PC-3 (cell line): ENCODE measurements at regions of chr10 and their contacts with region 1.

Region 1: GRCh38 chr10:73899423-73899822 is 11.5 kb upstream of the PLAU start:
- DNase-seq: peak; percentile 100
- ATAC-seq: peak; percentile 93
- H3K4me3 ChIP-seq: peak overlapping the region; percentile 8; the same call in 1 of the 2 replicates
- H3K27ac ChIP-seq: peak overlapping the region; percentile 78
- H3K4me1 ChIP-seq: peaks cover 54% of the 10 kb centered on the region
- H3K27me3 ChIP-seq: no peaks in the 10 kb centered on the region
- CTCF ChIP-seq: no peak

Region 2: DNA sequence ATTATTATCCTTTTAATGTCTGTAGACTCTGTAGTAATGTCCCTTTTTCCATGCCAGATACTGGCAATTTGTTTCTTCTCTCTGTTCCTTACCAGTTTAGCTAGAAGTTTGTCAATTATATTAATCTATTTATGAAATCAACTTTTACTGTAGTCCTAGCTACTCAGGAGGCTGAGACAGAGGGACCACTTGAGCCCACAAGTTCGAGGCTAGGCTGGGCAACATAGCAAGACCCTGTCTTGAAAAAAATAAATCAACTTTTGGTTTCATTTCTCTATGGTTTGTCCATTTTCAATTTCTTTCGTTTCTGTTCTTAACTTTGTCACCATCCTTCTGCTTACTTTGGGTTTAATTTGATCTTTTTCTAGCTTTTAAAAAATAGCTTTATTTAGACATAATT is 902.3 kb before region 1 on chr10:
- CTCF ChIA-PET with region 1: no interaction called
- POLR2A ChIA-PET with region 1: no interaction called
- intact Hi-C with region 1: no loop called
- DNase-seq: no peak
- ATAC-seq: peak; percentile 10; the same call in 1 of the 2 replicates
- H3K4me3 ChIP-seq: no peak overlapping the region
- H3K27ac ChIP-seq: no peak overlapping the region
- H3K4me1 ChIP-seq: no peaks in the 10 kb centered on the region
- H3K27me3 ChIP-seq: no peaks in the 10 kb centered on the region
- CTCF ChIP-seq: no peak

Region 3: DNA sequence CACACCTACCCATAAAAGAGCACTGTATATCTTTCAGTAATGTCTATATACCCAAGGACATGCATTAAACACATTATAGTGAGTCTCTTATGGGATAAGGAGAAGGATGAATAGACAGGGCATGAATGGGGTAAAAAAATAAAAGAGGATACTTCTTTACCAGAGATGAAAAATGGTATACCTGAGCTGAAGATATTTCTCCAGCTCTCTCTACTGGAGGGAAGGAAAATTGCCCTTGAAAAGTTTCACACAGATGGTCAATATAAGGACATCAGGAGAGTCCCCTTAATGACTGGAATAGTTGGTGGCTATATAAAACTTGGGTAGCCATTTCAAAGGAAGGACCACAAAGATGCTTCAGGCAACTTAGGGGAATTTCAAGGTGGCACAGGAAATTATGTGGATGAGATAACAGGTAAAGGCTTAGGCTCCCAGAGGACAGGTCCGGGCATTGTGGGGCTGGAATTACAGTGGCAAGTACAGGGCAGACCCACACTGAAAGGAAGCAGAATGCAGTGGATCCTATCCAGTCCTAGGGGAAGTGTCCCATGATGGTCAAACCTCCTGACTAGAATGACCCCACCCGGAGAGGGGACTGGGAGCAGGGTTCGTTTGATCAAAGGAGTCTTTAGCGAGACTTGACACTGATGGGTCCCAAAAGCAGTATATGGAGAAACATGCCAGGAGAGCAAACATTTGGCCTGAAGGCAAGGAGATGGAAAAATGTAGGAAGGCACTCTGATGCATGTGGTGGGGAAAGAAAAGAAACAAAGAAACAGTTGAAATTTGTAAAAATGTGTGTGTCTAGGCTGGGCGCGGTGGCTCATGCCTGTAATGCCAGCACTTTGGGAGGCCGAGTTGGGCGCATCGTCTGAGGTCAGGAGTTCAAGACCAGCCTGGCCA is 47.1 kb after region 1 on chr10:
- CTCF ChIA-PET with region 1: interaction called, 34 read pairs
- POLR2A ChIA-PET with region 1: interaction called, 15 read pairs
- intact Hi-C with region 1: no loop called
- DNase-seq: peak; percentile 69
- ATAC-seq: peak; percentile 17
- H3K4me3 ChIP-seq: no peak overlapping the region
- H3K27ac ChIP-seq: no peak overlapping the region
- H3K4me1 ChIP-seq: peaks cover 8% of the 10 kb centered on the region
- H3K27me3 ChIP-seq: no peaks in the 10 kb centered on the region
- CTCF ChIP-seq: peak; percentile 83

Region 4: DNA sequence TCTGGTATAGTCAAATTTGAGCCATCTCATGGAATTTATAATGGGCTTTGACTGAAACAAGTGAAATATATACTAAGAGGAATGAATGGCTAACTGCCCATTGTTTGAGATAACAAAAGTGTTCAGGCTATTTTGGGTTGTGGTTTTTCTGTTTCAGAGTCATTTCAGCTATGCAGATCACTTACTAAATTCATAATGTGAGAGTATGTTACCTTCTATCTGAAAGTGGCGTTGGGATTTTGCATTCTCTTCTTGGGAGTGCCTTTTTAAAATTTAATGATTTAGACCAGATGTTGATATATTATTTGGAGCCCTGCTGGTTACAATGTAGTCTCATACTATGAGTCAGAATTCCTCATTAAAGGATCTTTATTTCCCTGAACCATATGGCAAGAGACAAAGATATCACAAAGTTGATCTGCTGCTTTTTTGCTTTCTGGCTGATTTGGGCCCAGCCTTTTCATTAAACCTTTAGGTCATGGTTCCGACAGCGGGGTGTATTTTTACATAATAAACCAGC is 108.8 kb after region 1 on chr10:
- CTCF ChIA-PET with region 1: no interaction called
- POLR2A ChIA-PET with region 1: no interaction called
- intact Hi-C with region 1: no loop called
- DNase-seq: peak; percentile 98
- ATAC-seq: peak; percentile 80
- H3K4me3 ChIP-seq: peak overlapping the region; percentile 1; the same call in 1 of the 2 replicates
- H3K27ac ChIP-seq: peak overlapping the region; percentile 54
- H3K4me1 ChIP-seq: peaks cover 68% of the 10 kb centered on the region
- H3K27me3 ChIP-seq: no peaks in the 10 kb centered on the region
- CTCF ChIP-seq: 0 out of 2 replicates have a peak, but pooled peaks have one; percentile 17

Region 5: GRCh38 chr10:74021248-74022055 is 122.0 kb after region 1 on chr10:
- CTCF ChIA-PET with region 1: interaction called, 13 read pairs
- POLR2A ChIA-PET with region 1: no interaction called
- intact Hi-C with region 1: no loop called
- DNase-seq: peak; percentile 89
- ATAC-seq: peak; percentile 53
- H3K4me3 ChIP-seq: no peak overlapping the region
- H3K27ac ChIP-seq: peak overlapping the region; percentile 14
- H3K4me1 ChIP-seq: peaks cover 37% of the 10 kb centered on the region
- H3K27me3 ChIP-seq: no peaks in the 10 kb centered on the region
- CTCF ChIP-seq: no peak

Region 6: GRCh38 chr10:74058658-74059057 is 159.2 kb after region 1 on chr10:
- CTCF ChIA-PET with region 1: interaction called, 11 read pairs
- POLR2A ChIA-PET with region 1: interaction called, 6 read pairs
- intact Hi-C with region 1: no loop called
- DNase-seq: peak; percentile 77
- ATAC-seq: no peak
- H3K4me3 ChIP-seq: no peak overlapping the region; the same call in 1 of the 2 replicates
- H3K27ac ChIP-seq: peak overlapping the region; percentile 71
- H3K4me1 ChIP-seq: peaks cover 55% of the 10 kb centered on the region
- H3K27me3 ChIP-seq: no peaks in the 10 kb centered on the region
- CTCF ChIP-seq: peak; percentile 75

Region 7: DNA sequence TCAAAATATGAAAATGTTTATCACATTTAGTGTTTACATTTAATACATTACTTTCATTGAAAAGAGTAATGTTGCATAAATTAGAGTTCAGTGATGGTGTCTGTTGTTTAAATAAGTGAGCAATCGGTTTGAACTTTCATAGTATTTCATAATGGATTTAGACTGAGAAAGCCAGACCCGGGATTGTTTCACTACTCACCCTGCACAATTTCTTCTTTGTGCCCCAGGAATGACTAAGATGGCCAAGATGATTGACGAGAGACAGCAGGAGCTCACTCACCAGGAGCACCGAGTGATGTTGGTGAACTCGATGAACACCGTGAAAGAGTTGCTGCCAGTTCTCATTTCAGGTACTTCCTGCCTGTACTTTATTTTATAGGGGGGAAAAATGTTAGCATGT is 173.1 kb after region 1 on chr10:
- CTCF ChIA-PET with region 1: no interaction called
- POLR2A ChIA-PET with region 1: no interaction called
- intact Hi-C with region 1: no loop called
- DNase-seq: peak; percentile 80
- ATAC-seq: no peak
- H3K4me3 ChIP-seq: no peak overlapping the region
- H3K27ac ChIP-seq: no peak overlapping the region
- H3K4me1 ChIP-seq: peaks cover 15% of the 10 kb centered on the region
- H3K27me3 ChIP-seq: no peaks in the 10 kb centered on the region
- CTCF ChIP-seq: no peak